AG04449 (cell line): ENCODE measurements at regions of chr20 and their contacts with region 1.

Region 1: GRCh38 chr20:44187051-44187762 is at the start of gene JPH2:
- DNase-seq: no peak
- H3K4me3 ChIP-seq: peak within 1 kb of the TSS; percentile 62
- CTCF ChIP-seq: no peak

Region 2: GRCh38 chr20:43840382-43841070 is 346.7 kb before region 1 on chr20:
- CTCF ChIA-PET with region 1: no interaction called
- POLR2A ChIA-PET with region 1: no interaction called
- DNase-seq: no peak
- H3K4me3 ChIP-seq: no peak overlapping the region
- CTCF ChIP-seq: peak; percentile 50

Region 3: DNA sequence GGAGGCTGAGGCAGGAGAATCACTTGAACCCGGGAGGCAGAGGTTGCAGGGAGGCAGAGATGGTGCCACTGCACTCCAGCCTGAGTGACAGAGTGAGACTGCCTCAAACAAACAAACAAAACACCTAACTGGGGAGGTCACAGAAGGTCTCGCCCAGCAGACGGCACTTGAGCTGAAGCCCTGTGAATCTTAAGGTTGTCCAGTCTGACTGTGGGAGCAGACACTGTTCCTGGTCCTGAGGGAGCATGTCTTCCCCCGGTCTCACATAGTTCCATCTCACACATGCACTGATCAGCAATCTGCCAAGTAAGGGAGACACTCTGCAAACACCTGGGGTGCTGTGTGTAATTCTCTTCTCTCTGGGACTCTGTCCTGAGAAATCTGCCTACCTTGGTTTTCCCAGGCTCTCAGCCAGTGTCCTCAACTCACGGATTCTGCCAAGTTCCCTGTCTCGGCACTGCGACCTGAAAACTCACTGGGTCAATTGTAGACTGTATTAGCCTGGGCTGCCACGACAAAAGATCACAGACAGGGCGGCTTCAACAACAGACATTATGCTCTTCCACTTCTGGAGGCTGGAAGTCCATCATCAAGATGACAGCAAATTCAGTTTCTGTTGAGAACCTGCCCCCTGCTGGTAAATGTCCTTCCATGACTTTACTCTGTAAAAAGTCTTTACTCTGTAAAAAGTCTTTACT is 94.5 kb before region 1 on chr20:
- CTCF ChIA-PET with region 1: interaction called, 11 read pairs
- POLR2A ChIA-PET with region 1: no interaction called
- DNase-seq: no peak
- H3K4me3 ChIP-seq: no peak overlapping the region
- CTCF ChIP-seq: peak; percentile 33

Region 4: GRCh38 chr20:44123251-44123650 is 64.0 kb before region 1 on chr20:
- CTCF ChIA-PET with region 1: interaction called, 820 read pairs
- POLR2A ChIA-PET with region 1: no interaction called
- DNase-seq: no peak
- H3K4me3 ChIP-seq: no peak overlapping the region
- CTCF ChIP-seq: no peak

Region 5: DNA sequence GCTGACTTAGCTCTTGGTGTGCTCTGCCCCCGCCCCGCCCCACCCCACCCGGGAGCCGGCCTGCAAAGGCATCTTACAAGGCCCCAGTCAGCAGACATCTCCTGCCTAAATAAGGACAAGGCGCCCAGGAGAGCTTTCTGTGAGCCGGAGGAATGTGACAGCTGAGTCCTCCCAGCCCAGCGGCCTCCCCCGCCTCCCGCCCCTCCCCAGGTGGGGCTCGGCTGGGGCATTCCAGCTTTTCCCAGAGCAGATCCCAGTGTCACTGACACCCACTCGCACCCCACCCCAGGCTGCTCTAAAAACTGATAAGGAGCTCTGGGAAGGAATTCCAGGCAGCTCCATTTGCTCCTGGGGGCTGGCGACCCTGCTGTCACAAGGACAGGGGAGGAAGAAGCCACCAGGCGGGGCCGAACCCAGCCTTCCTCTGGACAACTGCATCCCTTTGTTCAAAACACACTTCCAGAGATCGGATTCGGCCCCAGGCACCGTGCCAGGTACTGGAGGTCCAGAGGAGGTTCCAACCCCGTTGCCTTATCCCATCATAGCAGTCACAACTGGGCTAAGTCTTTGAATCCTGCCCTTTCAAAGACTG is 49.9 kb before region 1 on chr20:
- CTCF ChIA-PET with region 1: interaction called, 33 read pairs
- POLR2A ChIA-PET with region 1: interaction called, 5 read pairs
- DNase-seq: peak; percentile 36
- H3K4me3 ChIP-seq: no peak overlapping the region
- CTCF ChIP-seq: no peak

Region 6: GRCh38 chr20:44153636-44154043 is 33.6 kb before region 1 on chr20:
- CTCF ChIA-PET with region 1: interaction called, 29 read pairs
- POLR2A ChIA-PET with region 1: interaction called, 6 read pairs
- DNase-seq: peak; percentile 16
- H3K4me3 ChIP-seq: no peak overlapping the region
- CTCF ChIP-seq: no peak

Region 7: GRCh38 chr20:44203161-44203560 is 16.0 kb after region 1 on chr20:
- CTCF ChIA-PET with region 1: interaction called, 33 read pairs
- POLR2A ChIA-PET with region 1: no interaction called
- DNase-seq: no peak
- H3K4me3 ChIP-seq: no peak overlapping the region
- CTCF ChIP-seq: no peak

Region 8: DNA sequence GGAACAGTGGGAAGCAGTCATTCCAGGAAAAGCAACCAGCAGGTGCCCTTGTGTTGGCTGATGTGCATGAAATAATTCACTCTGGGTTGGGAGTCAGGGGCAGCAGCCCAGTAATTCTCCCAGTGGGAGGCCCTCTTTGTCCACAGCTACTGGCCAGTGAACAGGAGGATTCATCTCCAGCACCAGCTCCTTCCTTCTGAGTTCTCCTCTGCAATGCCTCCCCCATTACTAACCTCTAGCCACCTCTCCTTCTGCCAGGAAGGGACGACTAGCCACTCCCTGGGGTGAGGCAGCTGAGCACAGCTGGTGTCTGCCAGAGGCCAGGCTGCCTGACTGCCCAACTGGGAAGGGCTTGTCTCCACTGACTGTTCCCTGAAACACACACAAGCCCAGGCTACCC is 137.1 kb after region 1 on chr20:
- CTCF ChIA-PET with region 1: no interaction called
- POLR2A ChIA-PET with region 1: no interaction called
- DNase-seq: no peak
- H3K4me3 ChIP-seq: no peak overlapping the region
- CTCF ChIP-seq: no peak